ENCODE measurements at regions of chr20 and their contacts with region 1.

Region 1: GRCh38 chr20:62143118-62143973 is at the starts of genes PSMA7 and SS18L1:
- DNase-seq: peak; percentile 87
- ATAC-seq: peak; percentile 87
- H3K4me3 Mint-ChIP-seq: peak within 1 kb of the TSS; percentile 87
- H3K27ac Mint-ChIP-seq: peak within 1 kb of the TSS; percentile 92
- H3K4me1 Mint-ChIP-seq: peaks cover 42% of the 10 kb centered on the region
- H3K27me3 Mint-ChIP-seq: no peaks in the 10 kb centered on the region
- total RNA-seq, gene PSMA7: 333 to 352 TPM
- total RNA-seq, gene SS18L1: 15.9 to 17.9 TPM

Region 2: DNA sequence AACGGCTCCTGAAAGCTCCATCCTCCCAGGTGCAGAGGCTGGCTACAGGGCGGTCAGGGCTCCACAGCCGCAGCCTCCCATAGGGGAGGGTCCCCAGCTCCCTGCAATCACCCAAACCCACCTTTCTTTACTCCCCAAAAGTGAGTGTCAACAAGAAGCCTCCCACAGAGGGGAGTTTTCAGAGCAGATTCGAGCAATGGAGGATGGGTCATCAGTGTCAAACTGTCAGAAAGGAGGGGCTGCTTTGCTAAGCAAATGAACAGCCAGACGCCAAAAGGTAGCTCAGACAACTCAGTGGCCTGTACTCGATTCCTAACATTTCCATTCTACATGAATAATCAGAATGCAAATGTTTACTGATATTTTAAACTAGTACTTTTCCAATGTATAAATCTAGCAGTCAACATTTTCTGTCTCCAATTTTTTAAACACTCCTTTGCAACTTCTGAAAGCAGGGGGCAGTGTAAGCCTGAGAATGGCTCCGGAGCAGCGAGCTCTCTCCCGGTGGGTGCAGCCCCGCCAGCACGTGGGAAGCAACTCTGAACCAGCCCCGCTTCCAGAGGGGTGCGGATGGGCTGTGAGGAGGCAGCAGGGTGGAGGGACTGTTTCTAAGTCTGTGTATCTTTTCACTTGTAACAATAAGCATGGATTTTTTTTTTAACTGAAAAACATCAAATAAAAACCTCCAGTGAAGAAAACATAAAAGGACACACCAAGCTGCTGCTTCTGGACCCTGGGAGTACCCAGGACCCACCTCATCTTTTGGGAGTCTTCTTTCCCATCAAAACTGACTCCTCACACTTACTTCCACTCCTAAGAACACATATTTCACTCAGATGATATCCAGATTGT is 132.6 kb before region 1 on chr20:
- CTCF ChIA-PET with region 1: interaction called, 14 read pairs
- POLR2A ChIA-PET with region 1: no interaction called
- DNase-seq: peak; percentile 67
- ATAC-seq: peak; percentile 75
- H3K4me3 Mint-ChIP-seq: no peak overlapping the region
- H3K27ac Mint-ChIP-seq: no peak overlapping the region
- H3K4me1 Mint-ChIP-seq: no peaks in the 10 kb centered on the region
- H3K27me3 Mint-ChIP-seq: no peaks in the 10 kb centered on the region

Region 3: DNA sequence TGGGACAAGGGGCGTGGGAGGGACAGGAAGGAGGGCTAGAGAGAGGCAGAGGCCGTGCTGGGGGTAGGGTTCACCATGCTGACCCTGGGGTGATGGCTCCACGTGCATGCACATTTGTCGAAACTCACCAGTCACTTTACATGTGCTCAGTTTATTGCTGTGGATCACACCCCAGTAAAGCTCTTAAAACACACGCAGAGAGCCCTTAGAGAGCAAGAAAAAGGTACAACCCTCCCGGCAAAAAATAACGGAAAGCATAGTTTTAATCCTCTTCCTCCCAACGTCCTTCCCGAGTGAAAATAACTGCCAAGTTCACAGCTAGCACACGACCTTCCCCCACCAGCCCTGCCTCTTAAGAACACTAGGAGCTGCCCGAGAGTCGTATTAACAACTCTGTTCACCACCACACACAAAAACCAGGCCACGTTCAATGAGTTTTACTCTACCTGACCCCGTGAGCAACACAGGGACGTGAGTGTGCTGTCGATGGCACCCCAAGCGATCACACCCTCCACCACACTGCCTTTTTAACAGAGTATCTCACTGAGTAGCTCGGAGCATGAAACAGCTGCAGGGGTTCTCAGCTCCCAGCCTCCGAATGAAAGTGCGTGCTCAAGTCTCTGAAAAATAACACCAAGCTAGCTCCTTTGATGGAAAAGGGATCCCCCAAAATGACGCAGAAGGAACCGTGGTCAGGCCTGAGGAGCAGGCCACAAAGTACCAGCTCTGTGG is 117.3 kb before region 1 on chr20:
- CTCF ChIA-PET with region 1: interaction called, 10 read pairs
- POLR2A ChIA-PET with region 1: no interaction called
- DNase-seq: peak; percentile 27
- ATAC-seq: peak; percentile 62
- H3K4me3 Mint-ChIP-seq: no peak overlapping the region
- H3K27ac Mint-ChIP-seq: no peak overlapping the region
- H3K4me1 Mint-ChIP-seq: peaks cover 25% of the 10 kb centered on the region
- H3K27me3 Mint-ChIP-seq: no peaks in the 10 kb centered on the region

Region 4: GRCh38 chr20:62065669-62066338 is 77.5 kb before region 1 on chr20 and contains the start of gene TAF4:
- CTCF ChIA-PET with region 1: interaction called, 3 read pairs
- POLR2A ChIA-PET with region 1: interaction called, 19 read pairs
- DNase-seq: peak; percentile 78
- ATAC-seq: peak; percentile 83
- H3K4me3 Mint-ChIP-seq: peak within 1 kb of the TSS; percentile 81
- H3K27ac Mint-ChIP-seq: peak within 1 kb of the TSS; percentile 86
- H3K4me1 Mint-ChIP-seq: peaks cover 36% of the 10 kb centered on the region
- H3K27me3 Mint-ChIP-seq: peaks cover 3% of the 10 kb centered on the region
- total RNA-seq, gene TAF4: 24.0 to 24.1 TPM

Region 5: GRCh38 chr20:62121776-62122631 is 21.3 kb before region 1 on chr20 and contains the start of gene LSM14B:
- CTCF ChIA-PET with region 1: interaction called, 15 read pairs
- POLR2A ChIA-PET with region 1: interaction called, 21 read pairs
- DNase-seq: peak; percentile 96
- ATAC-seq: peak; percentile 87
- H3K4me3 Mint-ChIP-seq: peak within 1 kb of the TSS; percentile 84
- H3K27ac Mint-ChIP-seq: peak within 1 kb of the TSS; percentile 97
- H3K4me1 Mint-ChIP-seq: peaks cover 49% of the 10 kb centered on the region
- H3K27me3 Mint-ChIP-seq: no peaks in the 10 kb centered on the region
- total RNA-seq, gene LSM14B: 42.4 to 42.8 TPM

Region 6: DNA sequence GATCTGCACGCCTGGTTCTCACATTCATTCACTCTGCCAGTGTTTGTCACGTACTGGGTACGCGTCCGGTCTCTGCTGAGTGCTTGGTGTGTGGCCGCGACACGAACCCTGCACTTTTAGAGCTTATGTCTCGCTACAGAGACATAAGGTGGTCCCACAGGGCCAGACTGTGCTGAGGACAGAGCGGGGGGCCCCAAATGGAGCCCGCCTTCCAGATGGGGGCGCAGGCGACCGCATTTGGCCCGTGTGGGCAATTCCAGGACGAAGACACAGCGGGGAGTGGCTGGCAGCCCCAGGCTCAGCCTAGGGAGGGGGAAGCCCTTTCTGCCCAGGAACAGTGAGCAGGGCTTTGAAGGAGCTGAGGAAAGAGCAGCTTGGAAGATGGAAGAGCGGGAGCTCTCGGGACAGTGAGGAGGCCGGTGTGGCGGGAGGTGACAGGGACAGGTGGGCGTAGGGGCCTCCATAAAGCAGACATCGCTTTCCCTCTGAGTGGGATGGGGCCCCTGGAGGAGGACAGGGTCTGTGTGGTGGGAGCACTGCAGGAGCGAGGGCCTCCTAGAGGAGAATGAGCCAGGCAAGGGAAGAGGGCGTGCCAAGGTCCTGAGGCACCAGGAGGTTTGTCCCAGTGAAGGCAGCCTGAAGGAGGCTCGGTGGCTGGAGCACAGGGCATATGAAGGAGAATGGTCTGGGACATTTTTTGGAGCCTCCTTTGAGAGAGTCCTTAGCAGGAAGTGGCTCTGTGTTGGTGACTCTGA is 31.7 kb after region 1 on chr20:
- CTCF ChIA-PET with region 1: no interaction called
- POLR2A ChIA-PET with region 1: no interaction called
- DNase-seq: no peak
- ATAC-seq: no peak
- H3K4me3 Mint-ChIP-seq: no peak overlapping the region
- H3K27ac Mint-ChIP-seq: peak overlapping the region; percentile 52
- H3K4me1 Mint-ChIP-seq: no peaks in the 10 kb centered on the region
- H3K27me3 Mint-ChIP-seq: no peaks in the 10 kb centered on the region